PC-3 (cell line): ENCODE measurements at regions of chr6 and their contacts with region 1.

Region 1: DNA sequence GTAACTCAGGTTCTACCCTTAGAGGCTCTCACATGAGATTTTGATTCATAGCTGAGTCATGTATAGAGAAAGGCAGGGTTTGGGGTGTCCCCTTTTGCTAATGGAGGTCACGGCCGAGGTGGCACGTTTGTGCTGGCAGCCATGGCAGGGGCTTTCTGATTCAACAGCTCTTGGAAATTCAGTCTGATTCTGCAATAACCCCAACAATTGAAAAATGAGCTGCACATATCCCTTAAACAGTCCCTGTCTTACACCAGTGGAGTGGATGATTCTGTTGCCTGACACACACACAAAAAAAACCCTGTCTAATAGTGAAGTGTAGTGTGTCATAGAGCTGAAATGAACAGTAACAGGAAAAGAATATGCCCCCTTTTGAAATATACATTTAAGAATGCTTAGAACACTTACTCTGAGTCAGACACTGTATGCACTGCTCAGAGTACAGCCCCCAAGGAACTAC is 40.4 kb upstream of the ARG1 start:
- DNase-seq: no peak
- ATAC-seq: no peak
- H3K4me3 ChIP-seq: no peak overlapping the region
- H3K27ac ChIP-seq: no peak overlapping the region
- H3K4me1 ChIP-seq: no peaks in the 10 kb centered on the region
- H3K27me3 ChIP-seq: no peaks in the 10 kb centered on the region
- CTCF ChIP-seq: no peak

Region 2: DNA sequence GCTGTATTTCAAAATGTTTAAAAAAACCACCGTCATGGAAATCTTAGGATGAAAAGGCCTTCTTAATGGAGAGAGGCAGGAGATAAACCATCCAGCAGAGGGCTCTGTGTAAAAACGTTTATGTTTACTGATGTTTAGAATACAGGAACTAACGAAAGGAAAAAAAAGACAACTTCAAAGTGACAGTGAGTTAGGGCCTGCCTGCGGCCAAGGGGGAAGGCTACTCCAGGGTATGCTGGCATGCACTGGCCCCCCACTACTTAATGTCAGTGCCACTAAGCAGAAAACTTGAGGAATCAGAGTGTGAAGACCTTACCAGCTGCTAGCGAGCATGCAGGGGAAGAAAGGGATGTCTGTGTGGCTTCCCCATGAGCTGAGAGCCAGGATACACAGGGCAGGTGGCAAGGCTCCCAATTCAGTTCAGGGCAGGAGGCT is 349.6 kb before region 1 on chr6:
- CTCF ChIA-PET with region 1: no interaction called
- POLR2A ChIA-PET with region 1: no interaction called
- intact Hi-C with region 1: loop called (anchors 1 kb)
- DNase-seq: peak; percentile 38
- ATAC-seq: peak; percentile 42; the same call in 1 of the 2 replicates
- H3K4me3 ChIP-seq: no peak overlapping the region
- H3K27ac ChIP-seq: no peak overlapping the region
- H3K4me1 ChIP-seq: no peaks in the 10 kb centered on the region
- H3K27me3 ChIP-seq: no peaks in the 10 kb centered on the region
- CTCF ChIP-seq: peak; percentile 61

Region 3: GRCh38 chr6:131199568-131200272 is 332.9 kb before region 1 on chr6:
- CTCF ChIA-PET with region 1: no interaction called
- POLR2A ChIA-PET with region 1: no interaction called
- intact Hi-C with region 1: loop called (anchors 2 kb)
- DNase-seq: peak; percentile 65
- ATAC-seq: peak; percentile 82
- H3K4me3 ChIP-seq: no peak overlapping the region
- H3K27ac ChIP-seq: no peak overlapping the region
- H3K4me1 ChIP-seq: no peaks in the 10 kb centered on the region
- H3K27me3 ChIP-seq: no peaks in the 10 kb centered on the region
- CTCF ChIP-seq: peak; percentile 80

Region 4: GRCh38 chr6:131205481-131206244 is 326.9 kb before region 1 on chr6:
- CTCF ChIA-PET with region 1: no interaction called
- POLR2A ChIA-PET with region 1: no interaction called
- intact Hi-C with region 1: loop called (anchors 1 kb)
- DNase-seq: no peak
- ATAC-seq: no peak
- H3K4me3 ChIP-seq: no peak overlapping the region
- H3K27ac ChIP-seq: no peak overlapping the region
- H3K4me1 ChIP-seq: no peaks in the 10 kb centered on the region
- H3K27me3 ChIP-seq: no peaks in the 10 kb centered on the region
- CTCF ChIP-seq: no peak

Region 5: GRCh38 chr6:131368198-131368911 is 164.3 kb before region 1 on chr6:
- CTCF ChIA-PET with region 1: no interaction called
- POLR2A ChIA-PET with region 1: no interaction called
- intact Hi-C with region 1: no loop called
- DNase-seq: no peak
- ATAC-seq: no peak
- H3K4me3 ChIP-seq: no peak overlapping the region
- H3K27ac ChIP-seq: no peak overlapping the region
- H3K4me1 ChIP-seq: no peaks in the 10 kb centered on the region
- H3K27me3 ChIP-seq: peaks cover 20% of the 10 kb centered on the region
- CTCF ChIP-seq: no peak

Region 6: DNA sequence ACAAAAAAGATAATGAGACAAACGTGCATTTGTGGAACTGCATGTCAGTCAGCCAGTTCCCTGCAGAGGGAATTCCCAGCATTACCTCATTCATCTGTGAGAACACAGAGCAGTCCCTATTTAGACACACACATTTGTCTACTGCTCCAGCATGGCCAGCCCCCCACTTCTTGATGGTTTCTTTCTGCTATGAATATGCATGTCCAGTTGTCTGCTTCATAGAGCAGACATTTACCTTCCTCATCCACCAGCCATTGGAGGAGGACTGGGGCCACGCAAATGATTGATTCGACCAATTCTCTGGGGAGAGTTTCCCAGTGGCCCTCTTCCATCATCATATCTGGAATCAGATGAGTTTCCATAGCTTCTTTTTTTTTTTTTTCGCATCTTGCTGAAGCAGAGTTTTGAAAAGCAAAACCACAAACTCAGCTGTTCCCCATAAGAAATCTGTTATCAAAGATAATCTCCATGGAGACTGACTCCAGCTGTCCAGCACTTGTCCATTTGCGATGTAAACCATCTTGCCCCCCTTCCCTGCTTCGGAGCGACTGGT is 287.0 kb after region 1 on chr6:
- CTCF ChIA-PET with region 1: no interaction called
- POLR2A ChIA-PET with region 1: no interaction called
- intact Hi-C with region 1: no loop called
- DNase-seq: no peak
- ATAC-seq: no peak
- H3K4me3 ChIP-seq: no peak overlapping the region
- H3K27ac ChIP-seq: no peak overlapping the region
- H3K4me1 ChIP-seq: no peaks in the 10 kb centered on the region
- H3K27me3 ChIP-seq: no peaks in the 10 kb centered on the region
- CTCF ChIP-seq: no peak